AG04450 (cell line): ENCODE measurements at regions of chr15 and their contacts with region 1.

Region 1: GRCh38 chr15:38662033-38662802 is 97.6 kb upstream of the RASGRP1 start:
- DNase-seq: no peak
- H3K4me3 ChIP-seq: no peak overlapping the region
- H3K27ac ChIP-seq: no peak overlapping the region
- H3K27me3 ChIP-seq: peaks cover 39% of the 10 kb centered on the region
- CTCF ChIP-seq: no peak

Region 2: DNA sequence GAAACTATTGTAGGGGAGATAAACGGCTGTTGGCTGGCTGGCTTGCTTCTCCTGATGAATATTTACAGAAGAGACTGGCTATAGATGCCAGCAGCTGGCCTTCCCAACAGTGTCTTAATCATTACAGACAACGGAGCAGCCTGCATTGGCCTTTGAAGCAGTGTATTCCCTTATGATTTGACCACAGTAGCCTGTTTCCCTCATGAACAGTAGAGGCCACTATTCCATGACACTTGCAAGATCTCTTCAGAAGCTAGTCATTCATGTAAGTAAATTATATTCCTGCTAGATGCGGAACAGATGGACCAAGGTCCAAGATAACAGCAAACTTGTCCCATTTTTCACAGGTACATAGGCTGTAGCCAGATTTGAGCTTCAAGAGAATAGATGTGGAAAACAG is 680.4 kb before region 1 on chr15:
- CTCF ChIA-PET with region 1: interaction called, 12 read pairs
- POLR2A ChIA-PET with region 1: no interaction called
- DNase-seq: no peak
- H3K4me3 ChIP-seq: no peak overlapping the region
- H3K27ac ChIP-seq: no peak overlapping the region
- H3K27me3 ChIP-seq: peaks cover 2% of the 10 kb centered on the region
- CTCF ChIP-seq: peak; percentile 68

Region 3: DNA sequence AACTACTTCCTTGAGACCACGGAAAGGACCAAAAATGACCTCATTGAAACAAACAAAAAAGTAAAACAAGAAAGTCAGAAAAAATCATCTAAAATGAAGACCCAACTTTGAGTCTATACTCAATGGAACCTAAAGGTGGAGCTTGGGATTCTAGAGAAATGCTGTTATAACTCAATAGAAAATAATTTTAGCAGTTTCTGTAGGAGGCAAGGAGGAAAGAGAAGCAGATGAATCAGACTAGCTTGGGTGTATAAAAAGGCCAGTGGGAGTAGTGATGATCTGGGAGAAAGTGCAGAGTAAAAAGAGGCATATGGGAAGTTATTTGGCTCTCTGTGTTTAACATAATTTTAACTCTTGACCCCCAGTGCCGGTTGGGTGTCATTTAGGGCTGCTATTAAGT is 633.3 kb before region 1 on chr15:
- CTCF ChIA-PET with region 1: no interaction called
- POLR2A ChIA-PET with region 1: no interaction called
- DNase-seq: no peak
- H3K4me3 ChIP-seq: no peak overlapping the region
- H3K27ac ChIP-seq: no peak overlapping the region
- H3K27me3 ChIP-seq: no peaks in the 10 kb centered on the region
- CTCF ChIP-seq: peak; percentile 39